AG04449 (cell line): ENCODE measurements at regions of chr1 and their contacts with region 1.

Region 1: DNA sequence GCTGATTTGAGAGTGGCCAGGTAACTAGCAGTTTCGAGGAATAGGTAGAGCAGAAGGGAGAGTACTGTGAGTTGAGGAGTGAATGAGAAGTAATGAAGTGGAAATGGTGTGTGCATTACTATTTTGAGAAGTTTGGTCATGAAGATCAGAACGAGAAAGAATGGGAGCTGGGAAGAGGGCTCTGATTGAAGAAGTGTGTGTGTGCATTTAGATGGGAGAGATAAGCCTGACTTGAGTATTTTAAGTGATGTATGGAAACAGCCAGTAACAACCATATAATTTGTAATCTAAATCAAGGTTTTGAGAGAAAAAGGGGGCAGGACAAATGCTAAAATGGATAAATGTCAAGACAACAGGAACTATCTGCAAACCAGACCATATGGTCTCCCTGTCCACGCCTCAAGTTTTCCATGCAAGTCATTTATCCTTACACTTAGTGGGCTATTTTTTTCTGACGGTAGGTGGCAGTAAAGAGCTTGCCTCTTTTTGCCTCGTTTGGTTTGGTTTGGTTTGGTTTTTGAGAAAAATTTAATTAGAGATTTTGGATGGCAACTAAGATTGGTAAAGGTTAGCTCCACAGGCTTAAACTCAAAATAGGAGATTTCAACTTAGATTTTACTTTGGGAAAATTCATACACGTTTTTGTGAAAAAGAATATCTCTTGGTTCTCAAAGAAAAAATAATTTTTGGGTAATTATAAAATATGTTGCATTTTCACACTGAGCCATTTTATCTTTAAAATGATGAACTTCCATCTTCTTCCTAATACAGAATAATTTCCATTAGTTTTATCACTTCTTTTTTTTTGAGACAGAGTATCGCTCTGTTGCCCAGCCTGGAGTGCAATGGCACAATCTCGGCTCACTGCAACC is 9.5 kb upstream of the B3GALNT2 start:
- DNase-seq: no peak
- H3K4me3 ChIP-seq: no peak overlapping the region
- CTCF ChIP-seq: peak; percentile 63

Region 2: DNA sequence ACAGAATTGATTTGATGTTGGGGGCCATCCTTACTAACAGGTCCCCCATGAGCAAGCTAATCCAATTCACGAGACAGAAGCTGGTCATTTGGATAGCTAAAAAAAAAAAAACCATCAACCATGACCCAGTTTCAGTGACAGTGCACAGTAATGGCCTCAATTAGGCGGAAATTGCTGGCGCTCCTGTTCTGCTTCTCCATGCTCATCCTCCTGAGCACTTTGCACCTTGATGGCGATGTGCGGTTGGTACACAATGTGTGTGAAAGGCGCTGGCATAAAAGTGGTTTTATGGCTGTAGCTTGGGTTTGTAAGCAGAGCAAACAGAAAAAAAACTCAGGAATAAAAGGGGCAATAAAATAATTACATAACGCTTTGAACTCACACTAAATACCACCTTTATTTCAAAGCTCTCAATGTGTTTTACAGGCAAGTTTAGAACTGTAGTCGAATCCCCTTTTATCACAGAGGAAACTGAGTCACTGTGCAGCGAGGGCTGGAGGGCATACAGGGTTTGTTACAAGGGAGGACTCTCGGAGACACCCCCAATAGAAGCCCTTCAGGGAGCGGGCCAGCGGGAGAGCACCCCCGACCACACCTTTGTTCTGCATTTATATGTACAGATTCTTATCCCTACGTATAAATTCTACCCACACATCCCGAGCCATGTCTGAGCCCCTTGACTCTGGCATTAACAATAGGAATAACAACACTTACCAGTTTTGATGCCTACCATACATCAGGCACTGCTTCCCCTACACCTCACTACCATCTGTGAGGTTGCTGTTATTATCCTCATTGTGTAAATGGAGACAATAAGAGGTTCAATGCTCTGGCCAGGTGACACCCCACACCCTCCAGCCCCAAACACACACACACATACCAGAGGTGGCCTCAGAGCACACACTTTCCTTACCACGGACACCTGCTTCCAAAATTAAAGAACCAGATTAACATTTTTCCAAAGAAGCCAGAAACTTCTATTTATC is 690.2 kb before region 1 on chr1:
- CTCF ChIA-PET with region 1: no interaction called
- POLR2A ChIA-PET with region 1: no interaction called
- DNase-seq: no peak
- H3K4me3 ChIP-seq: no peak overlapping the region
- CTCF ChIP-seq: no peak

Region 3: DNA sequence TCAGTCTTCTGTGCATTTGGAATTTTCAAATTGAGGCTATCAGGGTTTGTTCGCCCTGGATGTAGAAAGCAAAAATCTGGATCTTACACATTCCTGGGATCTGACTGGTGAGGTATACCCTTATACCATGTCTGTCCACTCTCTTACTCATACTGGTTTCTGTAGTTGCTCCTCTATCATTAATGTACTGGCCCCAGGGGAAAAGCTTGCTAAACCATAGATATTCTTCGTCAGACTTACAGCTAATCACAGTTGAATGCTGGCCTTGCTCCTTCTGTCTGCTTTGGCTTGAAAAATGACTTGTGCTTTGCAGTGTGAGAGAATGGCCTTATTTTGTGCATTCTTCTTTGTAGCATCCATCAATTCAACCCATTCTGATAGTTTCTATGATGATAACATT is 116.0 kb before region 1 on chr1:
- CTCF ChIA-PET with region 1: no interaction called
- POLR2A ChIA-PET with region 1: no interaction called
- DNase-seq: peak; percentile 96
- H3K4me3 ChIP-seq: no peak overlapping the region
- CTCF ChIP-seq: no peak

Region 4: GRCh38 chr1:235460770-235461169 is 53.0 kb before region 1 on chr1:
- CTCF ChIA-PET with region 1: no interaction called
- POLR2A ChIA-PET with region 1: no interaction called
- DNase-seq: no peak
- H3K4me3 ChIP-seq: no peak overlapping the region
- CTCF ChIP-seq: no peak

Region 5: DNA sequence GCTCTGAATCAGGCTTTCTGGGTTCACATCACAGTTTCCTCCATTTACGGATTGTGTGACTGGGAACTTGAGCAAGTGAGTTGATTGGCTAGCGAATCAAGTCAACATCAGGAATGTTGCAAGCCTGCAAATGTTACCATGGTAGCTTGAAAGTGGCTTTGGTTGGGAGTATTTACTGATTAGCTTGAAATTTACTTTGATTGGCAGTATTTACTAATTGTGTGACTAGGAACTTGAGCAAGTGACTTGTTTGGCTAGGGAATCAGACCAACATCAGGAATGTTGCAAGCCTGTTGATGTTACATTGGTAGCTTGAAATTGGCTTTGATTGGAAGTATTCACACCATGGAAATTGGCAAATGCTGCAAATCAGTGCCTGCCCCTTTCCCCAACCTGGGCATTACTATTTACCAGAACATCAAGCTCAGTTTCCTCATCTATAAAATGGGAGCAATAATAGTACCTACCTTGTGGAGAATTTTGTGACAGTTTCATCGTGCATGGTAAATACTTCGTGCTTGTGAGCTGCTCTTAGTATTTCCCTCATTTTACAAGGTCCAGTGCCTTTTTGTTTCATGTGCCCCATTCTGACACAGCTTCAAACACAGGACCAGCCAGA is 13.6 kb after region 1 on chr1:
- CTCF ChIA-PET with region 1: interaction called, 71 read pairs
- POLR2A ChIA-PET with region 1: no interaction called
- DNase-seq: no peak
- H3K4me3 ChIP-seq: no peak overlapping the region
- CTCF ChIP-seq: no peak

Region 6: DNA sequence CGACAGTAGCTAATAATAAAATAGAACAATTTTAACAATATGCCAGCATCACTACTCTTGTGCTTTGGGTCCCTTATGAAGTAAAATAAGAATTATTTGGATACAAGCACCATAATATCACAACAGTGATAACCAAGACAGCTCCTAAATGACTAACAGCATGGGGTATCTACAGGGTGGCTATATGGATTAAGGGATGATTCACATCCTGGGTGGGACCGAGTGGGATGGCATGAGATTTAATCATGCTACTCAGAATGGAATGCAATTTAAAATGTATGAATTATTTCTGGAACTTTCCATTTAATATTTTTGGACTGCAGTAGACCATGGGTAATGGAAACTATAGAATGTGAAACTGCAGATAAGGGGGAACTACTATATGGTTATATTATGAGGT is 18.6 kb after region 1 on chr1:
- CTCF ChIA-PET with region 1: interaction called, 71 read pairs
- POLR2A ChIA-PET with region 1: no interaction called
- DNase-seq: peak; percentile 40
- H3K4me3 ChIP-seq: no peak overlapping the region
- CTCF ChIP-seq: no peak

Region 7: GRCh38 chr1:235597867-235598553 is 84.3 kb after region 1 on chr1:
- CTCF ChIA-PET with region 1: interaction called, 10 read pairs
- POLR2A ChIA-PET with region 1: no interaction called
- DNase-seq: no peak
- H3K4me3 ChIP-seq: no peak overlapping the region
- CTCF ChIP-seq: peak; percentile 45

Region 8: DNA sequence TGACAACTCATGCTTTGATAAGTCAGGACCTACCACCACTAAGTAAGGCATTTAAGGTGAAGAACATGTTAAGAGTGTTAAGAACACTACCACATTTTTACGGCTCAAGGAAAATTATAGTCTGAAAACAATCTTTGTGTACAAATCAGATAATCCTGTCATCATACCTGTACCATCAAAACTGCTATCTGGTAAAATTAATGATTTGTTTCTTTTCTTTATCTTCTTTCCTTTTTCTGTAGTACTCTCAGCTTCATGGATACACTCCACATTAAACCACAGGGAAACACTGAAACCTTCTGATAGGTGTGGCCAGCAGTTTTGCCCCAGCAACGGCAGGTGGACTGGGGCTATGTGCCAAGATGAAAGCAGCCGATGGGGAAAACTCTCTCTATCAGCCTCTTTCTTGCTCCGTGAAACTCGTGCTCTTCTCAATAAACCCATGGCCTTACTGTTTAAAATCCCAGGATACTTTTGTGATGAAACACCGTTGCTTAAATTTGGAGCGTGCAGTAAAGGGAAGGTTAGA is 277.9 kb after region 1 on chr1:
- CTCF ChIA-PET with region 1: interaction called, 10 read pairs
- POLR2A ChIA-PET with region 1: no interaction called
- DNase-seq: no peak
- H3K4me3 ChIP-seq: no peak overlapping the region
- CTCF ChIP-seq: no peak

Region 9: GRCh38 chr1:235843461-235843961 is 329.8 kb after region 1 on chr1:
- CTCF ChIA-PET with region 1: interaction called, 14 read pairs
- POLR2A ChIA-PET with region 1: no interaction called
- DNase-seq: no peak
- H3K4me3 ChIP-seq: no peak overlapping the region
- CTCF ChIP-seq: peak; percentile 53